Caco-2 (cell line): ENCODE measurements at regions of chr3 and their contacts with region 1.

Region 1: DNA sequence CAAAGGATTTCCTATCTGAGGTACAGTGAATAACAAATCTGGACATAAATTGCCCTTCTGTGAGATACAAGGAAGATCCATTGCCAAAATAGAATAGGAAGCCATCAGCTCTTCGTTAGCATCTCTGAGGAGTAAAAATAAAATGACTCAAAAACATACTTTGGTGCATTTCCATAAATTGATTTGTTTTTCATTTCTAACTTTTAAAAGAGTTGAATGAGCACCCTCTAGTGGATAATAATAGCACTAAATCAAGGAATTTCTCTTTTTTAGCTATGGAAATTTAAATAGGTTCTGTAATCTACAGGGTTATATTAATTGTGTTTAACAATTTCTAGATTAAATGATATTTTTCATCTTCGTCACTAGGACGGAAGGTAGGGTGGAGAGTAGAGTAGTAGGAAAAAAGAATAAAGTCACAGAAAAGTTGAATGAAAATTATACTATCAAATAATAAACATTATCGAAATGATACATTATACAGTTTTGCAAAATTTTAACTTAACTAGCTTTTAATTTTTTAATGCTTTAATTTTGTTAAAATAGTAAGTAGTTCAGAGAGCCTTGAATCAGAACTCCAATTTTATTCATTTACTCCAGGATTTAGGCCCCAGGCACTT is 6.4 kb downstream of the NSUN3 start:
- DNase-seq: no peak
- H3K4me3 ChIP-seq: no peak overlapping the region
- H3K4me3 Mint-ChIP-seq: no peak overlapping the region
- H3K27ac Mint-ChIP-seq: no peak overlapping the region
- H3K4me1 ChIP-seq: no peaks in the 10 kb centered on the region
- H3K4me1 Mint-ChIP-seq: peaks cover 8% of the 10 kb centered on the region
- H3K27me3 ChIP-seq: no peaks in the 10 kb centered on the region
- H3K27me3 Mint-ChIP-seq: no peaks in the 10 kb centered on the region
- CTCF ChIP-seq: peak; percentile 29 to 31

Region 2: DNA sequence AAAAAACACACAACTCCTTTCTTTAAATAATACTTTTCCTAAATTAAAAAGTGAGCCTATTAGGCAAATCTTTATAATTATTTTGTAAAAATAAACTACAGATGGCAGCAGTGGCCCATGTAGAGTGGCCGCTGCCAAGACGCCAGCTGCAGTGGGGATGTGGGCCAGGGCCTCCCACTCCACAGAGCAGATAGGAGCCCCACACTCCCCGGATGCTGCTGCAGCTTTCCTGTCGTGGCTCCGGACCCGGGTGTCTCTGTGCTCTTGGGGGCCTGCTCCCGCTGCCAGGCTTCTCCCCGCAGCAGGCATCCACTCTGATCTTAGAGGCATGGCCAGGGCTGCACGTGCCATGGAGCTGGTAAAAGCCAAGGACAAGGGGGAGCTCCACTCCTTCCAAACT is 163.1 kb before region 1 on chr3:
- CTCF ChIA-PET with region 1: no interaction called
- POLR2A ChIA-PET with region 1: no interaction called
- intact Hi-C with region 1: loop called (anchors 2 kb)
- DNase-seq: no peak
- H3K4me3 ChIP-seq: no peak overlapping the region
- H3K4me3 Mint-ChIP-seq: no peak overlapping the region
- H3K27ac Mint-ChIP-seq: no peak overlapping the region
- H3K4me1 ChIP-seq: no peaks in the 10 kb centered on the region
- H3K4me1 Mint-ChIP-seq: no peaks in the 10 kb centered on the region
- H3K27me3 ChIP-seq: no peaks in the 10 kb centered on the region
- H3K27me3 Mint-ChIP-seq: no peaks in the 10 kb centered on the region
- CTCF ChIP-seq: no peak

Region 3: GRCh38 chr3:94004301-94004910 is 64.9 kb before region 1 on chr3:
- CTCF ChIA-PET with region 1: interaction called, 3 read pairs
- POLR2A ChIA-PET with region 1: no interaction called
- intact Hi-C with region 1: loop called (anchors 1 kb)
- DNase-seq: peak in 1 of 2 experiments; percentile 24
- H3K4me3 ChIP-seq: no peak overlapping the region
- H3K4me3 Mint-ChIP-seq: peak overlapping the region; percentile 14
- H3K27ac Mint-ChIP-seq: no peak overlapping the region
- H3K4me1 ChIP-seq: no peaks in the 10 kb centered on the region
- H3K4me1 Mint-ChIP-seq: no peaks in the 10 kb centered on the region
- H3K27me3 ChIP-seq: no peaks in the 10 kb centered on the region
- H3K27me3 Mint-ChIP-seq: no peaks in the 10 kb centered on the region
- CTCF ChIP-seq: peak; percentile 44 to 79

Region 4: GRCh38 chr3:94184781-94185180 is 115.5 kb after region 1 on chr3:
- CTCF ChIA-PET with region 1: no interaction called
- POLR2A ChIA-PET with region 1: no interaction called
- intact Hi-C with region 1: no loop called
- DNase-seq: no peak
- H3K4me3 ChIP-seq: no peak overlapping the region
- H3K4me3 Mint-ChIP-seq: no peak overlapping the region
- H3K27ac Mint-ChIP-seq: no peak overlapping the region
- H3K4me1 ChIP-seq: no peaks in the 10 kb centered on the region
- H3K4me1 Mint-ChIP-seq: no peaks in the 10 kb centered on the region
- H3K27me3 ChIP-seq: no peaks in the 10 kb centered on the region
- H3K27me3 Mint-ChIP-seq: peaks cover 2% of the 10 kb centered on the region
- CTCF ChIP-seq: no peak

Region 5: DNA sequence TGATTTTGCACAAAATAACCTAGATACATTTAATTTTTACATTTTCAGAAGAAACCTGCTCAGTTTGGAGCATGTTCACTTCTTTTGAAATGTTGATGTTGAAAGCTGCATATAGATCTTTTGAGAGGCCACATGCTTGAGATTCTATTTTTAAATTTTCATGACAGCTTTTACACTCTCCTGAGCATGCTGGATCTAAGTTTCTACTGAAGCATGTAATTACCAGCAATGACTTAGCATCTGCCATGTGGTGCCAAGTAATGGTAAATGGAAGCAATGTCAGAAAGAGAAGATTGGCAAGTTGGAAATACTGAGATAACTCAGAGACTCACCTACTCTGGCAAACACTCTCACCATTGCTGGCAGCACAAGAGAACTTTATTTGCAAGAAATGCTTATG is 304.2 kb after region 1 on chr3:
- CTCF ChIA-PET with region 1: no interaction called
- POLR2A ChIA-PET with region 1: no interaction called
- intact Hi-C with region 1: no loop called
- DNase-seq: no peak
- H3K4me3 ChIP-seq: no peak overlapping the region
- H3K4me3 Mint-ChIP-seq: no peak overlapping the region
- H3K27ac Mint-ChIP-seq: no peak overlapping the region
- H3K4me1 ChIP-seq: no peaks in the 10 kb centered on the region
- H3K4me1 Mint-ChIP-seq: no peaks in the 10 kb centered on the region
- H3K27me3 ChIP-seq: no peaks in the 10 kb centered on the region; the same call in 1 of the 2 replicates
- H3K27me3 Mint-ChIP-seq: no peaks in the 10 kb centered on the region
- CTCF ChIP-seq: no peak